HCT116 (cell line): ENCODE measurements at regions of chr1 and their contacts with region 1.

Region 1: GRCh38 chr1:3900119-3900968 is at the start of gene C1orf174:
- DNase-seq: peak; percentile 95
- ATAC-seq: peak; percentile 79
- H3K4me3 ChIP-seq: peak within 1 kb of the TSS; percentile 92 to 96
- H3K27ac ChIP-seq: peak within 1 kb of the TSS; percentile 96
- H3K4me1 ChIP-seq: peaks cover 0 to 15% of the 10 kb centered on the region in 2 experiments; a peak in 1 of 4 replicates
- H3K27me3 ChIP-seq: no peaks in the 10 kb centered on the region
- CTCF ChIP-seq: no peak
- POLR2A ChIP-seq: peak; percentile 28
- RAD21 ChIP-seq: no peak
- total RNA-seq, gene C1orf174: 33.7 TPM

Region 2: DNA sequence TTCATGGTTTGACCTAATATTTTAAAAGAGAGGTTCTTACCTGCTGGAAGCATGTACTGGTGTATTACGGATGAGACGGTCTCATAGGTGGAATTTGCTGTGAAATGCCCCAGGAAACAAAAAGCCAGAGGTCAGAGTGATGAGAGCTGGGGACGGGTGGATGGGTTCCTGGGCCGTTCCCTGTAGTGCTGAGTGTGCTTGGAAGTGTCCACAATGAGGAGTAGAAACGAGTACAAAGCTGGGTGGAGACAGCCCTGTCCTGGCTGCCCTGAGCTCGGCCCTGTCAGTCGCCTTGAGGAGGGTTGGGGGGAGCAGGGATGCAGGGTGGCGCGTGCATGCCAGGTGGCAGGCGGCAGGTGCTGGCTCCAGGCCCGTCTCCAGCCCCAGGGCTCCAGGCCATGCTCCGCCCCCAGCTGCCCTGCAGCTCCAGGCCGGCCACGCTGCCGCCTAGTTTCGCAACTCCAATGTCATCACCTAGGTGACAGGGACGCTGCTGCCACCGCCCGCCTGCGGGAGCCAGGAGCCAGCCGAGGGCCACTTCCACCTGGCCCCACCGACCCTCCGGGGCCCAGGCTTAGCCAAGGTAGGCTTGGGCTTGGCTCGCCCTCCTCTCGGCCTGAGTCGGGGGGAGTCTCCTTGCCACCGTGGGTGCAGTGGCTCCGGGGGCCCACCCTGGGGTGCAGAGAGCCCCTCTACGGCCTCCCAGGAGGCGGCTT is 231.6 kb before region 1 on chr1:
- CTCF ChIA-PET with region 1: no interaction called
- POLR2A ChIA-PET with region 1: no interaction called
- RAD21 ChIA-PET with region 1: no interaction called
- intact Hi-C with region 1: loop called (anchors 5 kb)
- DNase-seq: peak; percentile 49
- ATAC-seq: peak; percentile 90
- H3K4me3 ChIP-seq: no peak overlapping the region
- H3K27ac ChIP-seq: no peak overlapping the region
- H3K4me1 ChIP-seq: peaks cover 25 to 56% of the 10 kb centered on the region in 2 experiments
- H3K27me3 ChIP-seq: no peaks in the 10 kb centered on the region
- CTCF ChIP-seq: no peak
- POLR2A ChIP-seq: no peak
- RAD21 ChIP-seq: no peak

Region 3: DNA sequence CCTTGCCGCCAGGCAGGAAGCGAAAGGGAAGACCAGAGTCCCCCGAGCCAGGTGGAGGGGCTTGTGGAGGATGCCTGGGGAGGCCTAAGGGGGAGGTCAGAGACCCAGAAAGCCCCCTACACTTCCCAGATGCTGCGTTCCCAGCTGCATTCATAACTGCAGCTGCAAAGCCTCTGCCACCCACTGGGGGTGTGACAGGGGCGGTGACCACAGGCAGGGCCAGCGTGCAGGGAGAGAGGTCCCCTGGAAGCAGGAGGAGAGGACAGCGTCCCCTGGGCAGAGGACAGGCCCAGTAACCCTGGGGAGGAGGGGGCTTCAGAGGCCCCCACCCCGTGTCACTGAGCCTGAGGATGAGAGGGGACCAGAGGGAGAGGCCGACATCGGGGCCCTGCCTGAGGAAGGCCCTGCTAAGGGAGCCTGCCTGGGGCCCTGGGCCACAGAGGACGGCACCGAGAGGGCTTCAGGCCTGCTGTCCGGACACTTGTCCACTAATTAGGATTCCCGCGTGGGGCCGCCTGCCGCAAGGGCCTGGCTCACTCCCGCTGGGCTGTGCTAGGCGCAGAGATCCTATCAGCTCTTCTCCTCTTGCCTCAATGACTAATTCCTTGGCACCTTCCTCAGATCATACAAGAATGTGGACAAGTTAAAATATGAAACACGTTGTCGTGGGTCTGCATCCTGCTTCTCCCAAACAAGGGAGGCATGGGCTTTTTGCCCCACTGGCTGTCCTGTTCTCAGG is 197.2 kb before region 1 on chr1:
- CTCF ChIA-PET with region 1: no interaction called
- POLR2A ChIA-PET with region 1: no interaction called
- RAD21 ChIA-PET with region 1: no interaction called
- intact Hi-C with region 1: no loop called
- DNase-seq: no peak
- ATAC-seq: peak; percentile 47; the same call in 1 of the 2 replicates
- H3K4me3 ChIP-seq: no peak overlapping the region
- H3K27ac ChIP-seq: no peak overlapping the region
- H3K4me1 ChIP-seq: no peaks in the 10 kb centered on the region
- H3K27me3 ChIP-seq: no peaks in the 10 kb centered on the region
- CTCF ChIP-seq: no peak
- POLR2A ChIP-seq: no peak
- RAD21 ChIP-seq: no peak

Region 4: DNA sequence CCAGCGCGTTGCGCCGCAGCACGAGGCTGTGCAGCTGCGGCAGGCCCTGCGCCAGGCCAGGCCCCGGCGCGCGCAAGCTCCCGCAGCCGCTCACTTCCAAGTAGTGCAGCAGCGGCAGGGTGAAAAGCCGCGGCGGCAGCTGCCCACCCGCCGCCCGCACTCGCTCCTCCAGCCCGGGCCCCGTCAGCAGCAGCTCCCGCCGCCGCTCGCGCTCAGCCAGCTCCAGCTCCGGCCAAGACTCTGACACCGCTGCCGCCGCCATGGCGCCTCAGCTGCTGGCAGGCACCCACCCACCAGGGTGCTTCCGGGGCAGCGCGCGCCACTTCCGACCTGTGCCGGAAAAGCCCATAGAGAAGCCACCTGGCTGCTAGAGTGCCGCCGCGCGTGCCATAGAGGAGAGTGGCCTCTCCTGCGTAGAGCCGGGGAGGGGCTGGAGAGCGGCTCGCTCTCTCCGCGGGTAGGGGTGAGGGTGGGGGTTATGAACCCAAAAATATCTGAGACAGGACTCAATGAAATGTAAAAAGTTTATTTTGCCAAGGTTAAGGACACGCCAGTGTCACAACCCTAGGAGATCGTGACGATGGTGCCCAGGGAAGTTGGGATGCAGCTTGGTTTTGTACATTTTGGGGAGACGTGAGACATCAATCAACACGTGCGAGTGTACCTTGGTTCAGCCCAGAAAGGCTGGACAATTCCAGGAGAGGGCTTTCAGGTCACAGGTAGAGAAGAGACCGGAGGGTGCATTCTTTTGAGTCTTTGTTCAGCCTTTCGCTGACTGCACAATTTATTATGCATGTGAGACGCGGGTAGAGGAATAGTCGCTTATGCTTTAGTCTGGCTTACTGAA is 103.9 kb before region 1 on chr1 and contains the start of gene LRRC47:
- CTCF ChIA-PET with region 1: no interaction called
- POLR2A ChIA-PET with region 1: interaction called, 3 read pairs
- RAD21 ChIA-PET with region 1: no interaction called
- intact Hi-C with region 1: loop called (anchors 2 kb)
- DNase-seq: peak; percentile 77
- ATAC-seq: peak; percentile 98
- H3K4me3 ChIP-seq: peak within 1 kb of the TSS; percentile 80 to 95
- H3K27ac ChIP-seq: peak within 1 kb of the TSS; percentile 61
- H3K4me1 ChIP-seq: peaks cover 14 to 30% of the 10 kb centered on the region in 2 experiments; a peak in 3 of 4 replicates
- H3K27me3 ChIP-seq: no peaks in the 10 kb centered on the region
- CTCF ChIP-seq: no peak
- POLR2A ChIP-seq: peak; percentile 61
- RAD21 ChIP-seq: no peak
- total RNA-seq, gene LRRC47: 48.0 TPM

Region 5: DNA sequence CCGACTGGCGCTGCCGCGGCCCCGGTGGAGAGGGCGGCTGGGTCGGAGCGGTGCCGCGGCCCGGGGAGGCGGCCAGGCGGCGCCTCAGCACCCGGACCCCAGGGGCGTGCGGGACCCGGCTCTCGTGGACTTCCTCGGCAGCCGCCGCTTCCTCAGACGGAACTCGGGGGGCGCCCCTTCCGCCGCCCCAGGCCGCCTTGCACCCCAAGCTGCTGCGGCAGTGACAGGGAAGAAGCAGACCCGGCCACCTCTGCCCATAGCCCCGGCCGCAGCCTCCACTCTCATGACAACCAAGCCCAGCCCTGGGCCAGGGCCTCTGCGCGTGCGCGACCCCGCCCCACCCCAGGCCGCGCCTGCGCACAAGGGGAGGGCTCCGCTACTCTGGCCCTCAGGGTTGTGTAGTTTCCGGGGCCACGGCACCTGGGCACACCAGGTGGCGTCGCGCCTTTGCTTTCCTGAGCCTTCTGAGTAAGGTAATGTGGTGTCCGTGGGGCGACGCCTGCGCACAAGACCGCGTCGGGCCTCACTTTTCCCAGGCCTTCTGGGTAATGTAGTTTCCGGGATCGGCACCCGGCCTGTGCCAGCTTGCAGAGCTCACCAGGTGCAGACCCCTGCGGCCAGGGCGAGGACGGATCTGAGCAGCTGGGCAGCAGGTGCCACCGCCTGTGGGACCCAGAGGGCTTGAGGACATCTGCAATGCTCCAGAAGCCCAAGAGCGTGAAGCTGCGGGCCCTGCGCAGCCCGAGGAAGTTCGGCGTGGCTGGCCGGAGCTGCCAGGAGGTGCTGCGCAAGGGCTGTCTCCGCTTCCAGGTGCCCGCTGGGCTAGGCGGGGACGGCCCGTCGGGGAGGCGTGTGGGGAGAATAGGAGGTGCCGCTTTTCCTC is 43.2 kb before region 1 on chr1 and contains the starts of genes CEP104 and DFFB:
- CTCF ChIA-PET with region 1: interaction called, 12 read pairs
- POLR2A ChIA-PET with region 1: interaction called, 4 read pairs
- RAD21 ChIA-PET with region 1: no interaction called
- intact Hi-C with region 1: loop called (anchors 1 kb)
- DNase-seq: peak; percentile 97
- ATAC-seq: peak; percentile 96
- H3K4me3 ChIP-seq: peak within 1 kb of the TSS; percentile 70 to 93
- H3K27ac ChIP-seq: peak within 1 kb of the TSS; percentile 53
- H3K4me1 ChIP-seq: peaks cover 9 to 19% of the 10 kb centered on the region in 2 experiments; a peak in 3 of 4 replicates
- H3K27me3 ChIP-seq: no peaks in the 10 kb centered on the region
- CTCF ChIP-seq: peak; percentile 26 to 44 (median 28); a peak in 5 of 6 replicates
- POLR2A ChIP-seq: no peak
- RAD21 ChIP-seq: peak; percentile 71
- total RNA-seq, gene CEP104: 44.1 TPM
- total RNA-seq, gene DFFB: 9.0 TPM